ENCODE measurements at regions of chr11 and their contacts with region 1.

Region 1: GRCh38 chr11:119101759-119102423 is at the start of gene DPAGT1:
- DNase-seq: peak; percentile 60 to 96 (median 74)
- ATAC-seq: peak; percentile 88
- H3K4me3 ChIP-seq: peak within 1 kb of the TSS; percentile 79
- H3K27ac ChIP-seq: peak within 1 kb of the TSS; percentile 99
- H3K4me1 ChIP-seq: peaks cover 36 to 39% of the 10 kb centered on the region in 2 experiments
- H3K27me3 ChIP-seq: no peaks in the 10 kb centered on the region
- CTCF ChIP-seq: no peak
- EP300 ChIP-seq: peak; percentile 38
- POLR2A ChIP-seq: peak; percentile 64
- RAD21 ChIP-seq: no peak
- polyA plus RNA-seq, gene DPAGT1: 91.1 to 135 TPM

Region 2: GRCh38 chr11:118672846-118673245 is 429.0 kb before region 1 on chr11:
- CTCF ChIA-PET with region 1: no interaction called
- POLR2A ChIA-PET with region 1: no interaction called
- in situ Hi-C with region 1: no loop called
- intact Hi-C with region 1: no loop called
- DNase-seq: peak in 3 of 4 experiments; percentile 21 to 56 (median 34)
- ATAC-seq: peak; percentile 92
- H3K4me3 ChIP-seq: no peak overlapping the region
- H3K27ac ChIP-seq: no peak overlapping the region
- H3K4me1 ChIP-seq: no peaks in the 10 kb centered on the region
- H3K27me3 ChIP-seq: peaks cover 0 to 4% of the 10 kb centered on the region in 2 experiments; a peak in 1 of 5 replicates
- CTCF ChIP-seq: peak; percentile 45 to 48 (median 47); a peak in 4 of 6 replicates
- EP300 ChIP-seq: no peak
- POLR2A ChIP-seq: no peak
- RAD21 ChIP-seq: peak in 1 of 2 experiments; percentile 43; a peak in 2 of 4 replicates

Region 3: GRCh38 chr11:118907051-118908042 is 194.5 kb before region 1 on chr11:
- CTCF ChIA-PET with region 1: no interaction called
- POLR2A ChIA-PET with region 1: no interaction called
- in situ Hi-C with region 1: no loop called
- intact Hi-C with region 1: loop called (anchors 5 kb)
- DNase-seq: peak; percentile 80 to 88 (median 80)
- ATAC-seq: peak; percentile 79
- H3K4me3 ChIP-seq: no peak overlapping the region
- H3K27ac ChIP-seq: no peak overlapping the region
- H3K4me1 ChIP-seq: peaks cover 24 to 50% of the 10 kb centered on the region in 2 experiments
- H3K27me3 ChIP-seq: no peaks in the 10 kb centered on the region
- CTCF ChIP-seq: peak; percentile 93 to 95 (median 95)
- EP300 ChIP-seq: no peak
- POLR2A ChIP-seq: no peak
- RAD21 ChIP-seq: peak; percentile 96 to 98

Region 4: GRCh38 chr11:119030329-119031049 is 71.4 kb before region 1 on chr11 and contains the start of gene SLC37A4:
- CTCF ChIA-PET with region 1: no interaction called
- POLR2A ChIA-PET with region 1: no interaction called
- in situ Hi-C with region 1: no loop called
- intact Hi-C with region 1: loop called (anchors 2 kb)
- DNase-seq: peak; percentile 95 to 99 (median 96)
- ATAC-seq: peak; percentile 92
- H3K4me3 ChIP-seq: peak within 1 kb of the TSS; percentile 92
- H3K27ac ChIP-seq: peak within 1 kb of the TSS; percentile 92
- H3K4me1 ChIP-seq: peaks cover 30 to 41% of the 10 kb centered on the region in 2 experiments; a peak in 4 of 5 replicates
- H3K27me3 ChIP-seq: no peaks in the 10 kb centered on the region
- CTCF ChIP-seq: peak; percentile 94 to 96 (median 95)
- EP300 ChIP-seq: 0 out of 2 replicates have a peak, but pooled peaks have one; percentile 34
- POLR2A ChIP-seq: peak; percentile 73
- RAD21 ChIP-seq: peak; percentile 60 to 74; a peak in 3 of 4 replicates
- polyA plus RNA-seq, gene SLC37A4: 24.7 to 40.7 TPM

Region 5: GRCh38 chr11:119121008-119121810 is 19.3 kb after region 1 on chr11 and contains the start of gene HINFP:
- CTCF ChIA-PET with region 1: no interaction called
- POLR2A ChIA-PET with region 1: interaction called, 6 read pairs
- in situ Hi-C with region 1: no loop called
- intact Hi-C with region 1: loop called (anchors 2 kb)
- DNase-seq: peak; percentile 97 to 99 (median 98)
- ATAC-seq: peak; percentile 97
- H3K4me3 ChIP-seq: peak within 1 kb of the TSS; percentile 86
- H3K27ac ChIP-seq: peak within 1 kb of the TSS; percentile 68
- H3K4me1 ChIP-seq: peaks cover 13 to 17% of the 10 kb centered on the region in 2 experiments
- H3K27me3 ChIP-seq: no peaks in the 10 kb centered on the region
- CTCF ChIP-seq: no peak
- EP300 ChIP-seq: no peak
- POLR2A ChIP-seq: peak; percentile 84
- RAD21 ChIP-seq: no peak
- polyA plus RNA-seq, gene HINFP: 22.5 to 34.1 TPM

Region 6: GRCh38 chr11:119196833-119197483 is 95.1 kb after region 1 on chr11:
- CTCF ChIA-PET with region 1: interaction called, 5 read pairs
- POLR2A ChIA-PET with region 1: interaction called, 7 read pairs
- in situ Hi-C with region 1: loop called (anchors 5 kb)
- intact Hi-C with region 1: loop called (anchors 1 kb)
- DNase-seq: peak; percentile 73 to 88 (median 77)
- ATAC-seq: peak; percentile 95
- H3K4me3 ChIP-seq: no peak overlapping the region
- H3K27ac ChIP-seq: no peak overlapping the region
- H3K4me1 ChIP-seq: peaks cover 0 to 3% of the 10 kb centered on the region in 2 experiments; a peak in 2 of 5 replicates
- H3K27me3 ChIP-seq: no peaks in the 10 kb centered on the region
- CTCF ChIP-seq: peak; percentile 84 to 94 (median 85)
- EP300 ChIP-seq: peak; percentile 33; the same call in 1 of the 2 replicates
- POLR2A ChIP-seq: no peak
- RAD21 ChIP-seq: peak; percentile 89 to 94

Region 7: GRCh38 chr11:119373921-119374631 is 272.2 kb after region 1 on chr11:
- CTCF ChIA-PET with region 1: no interaction called
- POLR2A ChIA-PET with region 1: interaction called, 3 read pairs
- in situ Hi-C with region 1: no loop called
- intact Hi-C with region 1: loop called (anchors 5 kb)
- DNase-seq: peak; percentile 58 to 77 (median 65)
- ATAC-seq: peak; percentile 54
- H3K4me3 ChIP-seq: no peak overlapping the region
- H3K27ac ChIP-seq: no peak overlapping the region; the same call in 2 of the 3 replicates
- H3K4me1 ChIP-seq: peaks cover 66 to 77% of the 10 kb centered on the region in 2 experiments
- H3K27me3 ChIP-seq: no peaks in the 10 kb centered on the region
- CTCF ChIP-seq: peak; percentile 88 to 94 (median 92)
- EP300 ChIP-seq: peak; percentile 12; the same call in 1 of the 2 replicates
- POLR2A ChIP-seq: no peak
- RAD21 ChIP-seq: peak; percentile 72 to 93